GM12878 (cell line): ENCODE measurements at regions of chr16 and their contacts with region 1.

Region 1: DNA sequence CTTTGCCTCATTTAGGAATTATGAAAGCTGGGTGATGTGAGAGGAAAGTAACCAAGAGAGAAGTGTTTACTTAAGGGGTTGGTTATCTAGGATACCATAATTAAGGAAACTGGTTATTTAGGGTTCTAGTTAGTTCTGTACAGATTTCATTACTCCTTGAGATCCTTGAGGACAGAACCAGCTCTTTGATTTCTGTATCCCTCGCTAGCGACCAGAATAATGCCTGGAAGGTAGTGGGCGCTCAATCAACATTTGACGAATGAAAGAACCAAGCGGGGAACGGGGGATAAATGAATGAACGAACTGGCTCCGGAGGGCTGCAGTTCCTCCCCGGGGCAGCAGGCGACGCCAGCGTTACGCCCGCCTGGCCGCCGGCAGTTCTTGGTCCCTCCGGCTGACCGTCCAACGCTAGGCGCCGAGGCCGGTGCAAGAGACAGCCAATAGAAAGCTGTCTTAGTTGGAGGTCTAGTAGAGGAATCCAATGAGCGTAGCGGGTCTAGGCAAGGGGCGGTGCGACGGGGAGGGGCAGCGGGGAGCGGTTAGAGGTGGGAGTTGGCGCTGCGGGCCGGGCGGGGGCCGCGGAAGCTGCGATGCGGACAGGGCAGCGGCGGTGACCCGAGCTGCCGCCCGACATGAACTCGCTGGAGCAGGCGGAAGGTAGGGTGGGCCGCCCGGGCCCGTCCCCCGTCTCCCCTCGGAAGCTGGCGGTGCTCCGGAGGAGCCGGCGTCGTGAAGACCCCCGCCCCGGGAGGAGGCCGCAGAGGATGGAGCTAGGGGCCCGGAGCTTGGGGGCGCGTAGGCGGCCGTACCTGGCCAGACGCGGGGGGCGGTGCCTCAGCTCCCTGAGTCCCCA is at the start of gene CNEP1R1:
- DNase-seq: peak; percentile 93
- ATAC-seq: peak; percentile 98
- H3K4me3 ChIP-seq: peak within 1 kb of the TSS; percentile 76
- H3K27ac ChIP-seq: peak within 1 kb of the TSS; percentile 64
- H3K4me1 ChIP-seq: 0 out of 2 replicates have a peak, but pooled peaks cover 3% of the 10 kb centered on the region
- H3K27me3 ChIP-seq: no peaks in the 10 kb centered on the region
- CTCF ChIP-seq: peak; percentile 100; a peak in 5 of 6 replicates
- EP300 ChIP-seq: no peak
- POLR2A ChIP-seq: peak; percentile 84
- RAD21 ChIP-seq: peak; percentile 82
- polyA plus RNA-seq, gene CNEP1R1: 11.5 to 15.7 TPM

Region 2: DNA sequence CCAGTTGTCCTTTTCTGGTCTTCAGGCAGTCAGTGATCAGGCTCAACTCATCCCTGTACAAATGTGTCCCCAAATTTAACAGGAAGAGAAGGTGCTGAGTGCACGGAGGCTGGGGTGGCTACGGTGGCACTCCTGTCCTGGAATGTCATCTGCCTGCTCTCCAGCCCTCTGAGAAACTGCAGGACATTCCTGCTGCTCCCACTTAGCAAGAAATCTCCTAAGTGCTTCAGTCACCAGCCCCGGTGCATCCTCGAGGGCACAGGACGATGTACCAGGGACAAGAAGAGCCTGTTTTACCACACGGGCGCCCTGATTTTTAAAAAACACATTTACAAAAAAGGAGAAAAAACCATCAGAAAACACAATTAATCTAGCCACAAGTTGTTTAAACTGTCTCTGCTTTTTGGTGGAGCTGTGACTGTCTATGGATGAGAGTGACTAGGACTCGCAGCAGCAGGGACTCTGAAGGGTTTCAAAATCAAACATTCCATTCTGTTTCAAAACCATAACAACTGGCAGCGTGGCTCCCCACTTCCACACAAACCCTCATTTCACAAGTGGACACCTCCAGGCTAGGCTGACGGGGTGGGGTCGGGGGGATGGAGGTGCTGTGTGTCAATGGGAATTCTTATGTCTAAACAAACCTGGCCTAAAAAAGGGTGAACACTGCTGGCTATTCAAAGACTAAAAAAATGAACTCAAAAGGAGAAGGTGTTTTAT is 65.2 kb before region 1 on chr16:
- CTCF ChIA-PET with region 1: interaction called, 6 read pairs
- POLR2A ChIA-PET with region 1: no interaction called
- RAD21 ChIA-PET with region 1: interaction called, 9 read pairs
- SMC1A ChIA-PET with region 1: no interaction called
- in situ Hi-C with region 1: no loop called
- intact Hi-C with region 1: loop called (anchors 2 kb)
- DNase-seq: no peak
- ATAC-seq: no peak
- H3K4me3 ChIP-seq: no peak overlapping the region
- H3K27ac ChIP-seq: no peak overlapping the region
- H3K4me1 ChIP-seq: no peaks in the 10 kb centered on the region
- H3K27me3 ChIP-seq: no peaks in the 10 kb centered on the region
- CTCF ChIP-seq: no peak
- EP300 ChIP-seq: no peak
- POLR2A ChIP-seq: no peak
- RAD21 ChIP-seq: no peak

Region 3: DNA sequence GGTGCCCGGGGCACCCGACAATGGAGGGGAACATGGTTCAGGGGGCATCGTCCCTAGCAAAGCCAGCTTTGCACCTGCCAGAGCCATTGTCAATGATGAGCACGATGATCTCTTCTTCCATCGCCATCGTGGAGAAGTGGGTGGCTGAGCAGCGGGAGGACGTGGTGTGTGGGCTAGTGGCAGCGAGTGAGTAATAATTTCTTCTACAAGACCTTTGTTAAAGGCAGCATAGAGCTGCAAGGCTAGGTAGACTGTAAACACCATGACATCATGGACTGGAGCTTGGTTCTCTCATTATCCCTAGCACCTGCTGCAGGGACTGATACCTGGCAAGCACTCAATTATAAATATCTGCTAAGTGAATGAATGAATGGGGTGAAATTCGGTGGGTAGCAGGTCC is 34.2 kb after region 1 on chr16:
- CTCF ChIA-PET with region 1: interaction called, 80 read pairs
- POLR2A ChIA-PET with region 1: interaction called, 4 read pairs
- RAD21 ChIA-PET with region 1: interaction called, 66 read pairs
- SMC1A ChIA-PET with region 1: interaction called, 3 read pairs
- in situ Hi-C with region 1: no loop called
- intact Hi-C with region 1: no loop called
- DNase-seq: no peak
- ATAC-seq: no peak
- H3K4me3 ChIP-seq: no peak overlapping the region
- H3K27ac ChIP-seq: no peak overlapping the region
- H3K4me1 ChIP-seq: no peaks in the 10 kb centered on the region
- H3K27me3 ChIP-seq: no peaks in the 10 kb centered on the region
- CTCF ChIP-seq: no peak
- EP300 ChIP-seq: no peak
- POLR2A ChIP-seq: no peak
- RAD21 ChIP-seq: no peak

Region 4: DNA sequence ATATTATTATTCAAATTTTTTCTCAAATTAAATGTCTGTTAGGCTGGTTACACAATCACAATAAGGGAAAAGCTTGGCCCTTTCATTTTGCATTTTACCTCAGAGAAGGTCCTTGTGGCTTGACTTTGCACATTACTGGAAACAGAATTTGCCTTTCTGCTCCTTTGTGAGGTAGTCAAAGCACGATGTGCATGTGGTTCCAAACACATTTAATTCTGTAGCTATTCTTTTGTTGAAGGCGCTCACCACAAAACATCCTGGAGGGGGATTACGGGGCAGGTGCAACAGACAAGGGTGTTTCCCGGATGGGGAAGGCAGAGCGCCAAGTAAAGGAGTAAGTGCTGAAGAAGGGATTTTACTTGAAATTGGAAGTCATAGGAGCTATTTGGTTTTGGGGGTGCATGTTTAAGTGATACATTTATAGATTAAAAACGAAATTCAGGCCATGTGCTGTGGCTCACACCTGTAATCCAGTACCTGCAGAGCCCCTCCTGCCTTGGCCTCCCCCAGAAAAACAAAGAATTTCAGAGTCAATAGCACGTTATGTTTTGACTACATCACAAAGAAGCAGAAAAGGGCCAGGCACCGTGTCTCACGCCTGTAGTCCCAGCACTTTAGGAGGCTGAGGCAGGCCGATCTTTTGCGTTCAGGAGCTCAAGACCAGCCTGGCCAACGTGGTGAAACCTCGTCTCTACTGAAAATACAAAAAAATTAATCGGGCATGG is 97.0 kb after region 1 on chr16:
- CTCF ChIA-PET with region 1: interaction called, 17 read pairs
- POLR2A ChIA-PET with region 1: no interaction called
- RAD21 ChIA-PET with region 1: interaction called, 4 read pairs
- SMC1A ChIA-PET with region 1: interaction called, 13 read pairs
- in situ Hi-C with region 1: no loop called
- intact Hi-C with region 1: no loop called
- DNase-seq: peak; percentile 72
- ATAC-seq: peak; percentile 82
- H3K4me3 ChIP-seq: peak overlapping the region; percentile 16; the same call in 1 of the 2 replicates
- H3K27ac ChIP-seq: peak overlapping the region; percentile 75
- H3K4me1 ChIP-seq: peaks cover 32% of the 10 kb centered on the region
- H3K27me3 ChIP-seq: no peaks in the 10 kb centered on the region
- CTCF ChIP-seq: no peak
- EP300 ChIP-seq: peak; percentile 56 to 85; a peak in 3 of 4 replicates
- POLR2A ChIP-seq: no peak
- RAD21 ChIP-seq: no peak

Region 5: GRCh38 chr16:50195276-50195675 is 170.4 kb after region 1 on chr16:
- CTCF ChIA-PET with region 1: interaction called, 6 read pairs
- POLR2A ChIA-PET with region 1: no interaction called
- RAD21 ChIA-PET with region 1: interaction called, 13 read pairs
- SMC1A ChIA-PET with region 1: interaction called, 13 read pairs
- in situ Hi-C with region 1: no loop called
- intact Hi-C with region 1: no loop called
- DNase-seq: no peak
- ATAC-seq: peak; percentile 12
- H3K4me3 ChIP-seq: peak overlapping the region; percentile 43; the same call in 1 of the 2 replicates
- H3K27ac ChIP-seq: peak overlapping the region; percentile 75
- H3K4me1 ChIP-seq: peaks cover 42% of the 10 kb centered on the region
- H3K27me3 ChIP-seq: no peaks in the 10 kb centered on the region
- CTCF ChIP-seq: no peak
- EP300 ChIP-seq: no peak
- POLR2A ChIP-seq: no peak
- RAD21 ChIP-seq: no peak

Region 6: GRCh38 chr16:50360033-50360778 is 335.3 kb after region 1 on chr16:
- CTCF ChIA-PET with region 1: interaction called, 51 read pairs
- POLR2A ChIA-PET with region 1: interaction called, 3 read pairs
- RAD21 ChIA-PET with region 1: interaction called, 14 read pairs
- SMC1A ChIA-PET with region 1: interaction called, 8 read pairs
- in situ Hi-C with region 1: no loop called
- intact Hi-C with region 1: loop called (anchors 10 kb)
- DNase-seq: no peak
- ATAC-seq: peak; percentile 20; the same call in 2 of the 3 replicates
- H3K4me3 ChIP-seq: no peak overlapping the region
- H3K27ac ChIP-seq: no peak overlapping the region
- H3K4me1 ChIP-seq: no peaks in the 10 kb centered on the region
- H3K27me3 ChIP-seq: no peaks in the 10 kb centered on the region
- CTCF ChIP-seq: no peak
- EP300 ChIP-seq: no peak
- POLR2A ChIP-seq: no peak
- RAD21 ChIP-seq: no peak